HepG2 (cell line): ENCODE measurements at regions of chr18 and their contacts with region 1.

Region 1: DNA sequence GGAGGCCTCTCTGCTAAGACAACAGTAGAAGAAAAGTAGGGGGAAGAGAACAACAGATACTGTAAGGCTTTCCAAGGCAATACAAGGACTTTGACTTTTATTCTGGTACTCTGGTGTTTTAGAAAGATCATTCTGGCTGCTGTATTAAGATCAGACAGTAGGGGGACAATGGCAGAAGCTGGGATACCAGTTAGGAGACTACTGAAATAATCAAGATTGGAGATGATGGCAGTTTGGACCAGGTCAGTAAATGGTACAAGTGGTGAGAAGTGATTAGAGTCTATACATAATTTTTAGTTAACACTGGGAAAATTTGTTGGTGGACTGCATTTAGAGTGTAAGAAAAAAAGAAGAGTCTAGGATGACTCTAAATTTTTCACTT is 139.7 kb downstream of the ROCK1 start:
- DNase-seq: peak; percentile 23
- ATAC-seq: peak; percentile 76
- H3K4me3 ChIP-seq: no peak overlapping the region
- H3K27ac ChIP-seq: no peak overlapping the region
- H3K4me1 ChIP-seq: no peaks in the 10 kb centered on the region
- H3K27me3 ChIP-seq: no peaks in the 10 kb centered on the region
- CTCF ChIP-seq: peak; percentile 30; the same call in 1 of the 2 replicates
- EP300 ChIP-seq: no peak
- POLR2A ChIP-seq: no peak
- RAD21 ChIP-seq: peak; percentile 18; the same call in 1 of the 2 replicates

Region 2: DNA sequence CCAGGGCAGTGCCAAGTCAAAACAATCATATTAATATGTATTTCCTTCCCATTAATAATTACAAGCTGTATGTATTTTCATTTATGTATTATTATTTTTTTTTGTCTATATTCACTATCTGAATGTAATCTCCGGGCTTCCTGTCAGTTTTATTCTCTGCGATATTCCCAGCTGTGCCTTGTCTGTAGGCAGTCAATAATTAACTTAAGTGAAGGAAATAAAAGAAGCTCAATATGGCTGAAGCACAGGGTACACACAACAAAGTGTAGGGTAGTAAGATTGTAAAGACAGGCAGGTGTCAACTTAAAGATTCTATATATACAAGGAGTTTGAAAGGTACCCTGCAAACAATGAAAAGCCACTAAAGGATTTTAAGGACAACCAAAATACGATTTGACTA is 16.8 kb after region 1 on chr18:
- CTCF ChIA-PET with region 1: no interaction called
- POLR2A ChIA-PET with region 1: no interaction called
- in situ Hi-C with region 1: no loop called
- intact Hi-C with region 1: no loop called
- DNase-seq: no peak
- ATAC-seq: no peak
- H3K4me3 ChIP-seq: no peak overlapping the region
- H3K27ac ChIP-seq: no peak overlapping the region
- H3K4me1 ChIP-seq: no peaks in the 10 kb centered on the region
- H3K27me3 ChIP-seq: no peaks in the 10 kb centered on the region
- CTCF ChIP-seq: no peak
- EP300 ChIP-seq: no peak
- POLR2A ChIP-seq: no peak
- RAD21 ChIP-seq: no peak

Region 3: GRCh38 chr18:21179590-21180220 is 207.8 kb after region 1 on chr18:
- CTCF ChIA-PET with region 1: interaction called, 11 read pairs
- POLR2A ChIA-PET with region 1: no interaction called
- in situ Hi-C with region 1: loop called (anchors 10 kb)
- intact Hi-C with region 1: loop called (anchors 5 kb)
- DNase-seq: peak; percentile 52
- ATAC-seq: peak; percentile 73
- H3K4me3 ChIP-seq: no peak overlapping the region
- H3K27ac ChIP-seq: no peak overlapping the region
- H3K4me1 ChIP-seq: peaks cover 7% of the 10 kb centered on the region
- H3K27me3 ChIP-seq: no peaks in the 10 kb centered on the region
- CTCF ChIP-seq: peak; percentile 86
- EP300 ChIP-seq: no peak
- POLR2A ChIP-seq: no peak
- RAD21 ChIP-seq: peak; percentile 61; the same call in 1 of the 2 replicates